ENCODE measurements at regions of chr1 and their contacts with region 1.

Region 1: GRCh38 chr1:226157761-226158316 is 28.7 kb downstream of the ACBD3 start:
- DNase-seq: no peak
- ATAC-seq: peak; percentile 80
- H3K4me3 Mint-ChIP-seq: peak overlapping the region; percentile 29
- H3K27ac Mint-ChIP-seq: peak overlapping the region; percentile 89
- H3K4me1 Mint-ChIP-seq: peaks cover 78% of the 10 kb centered on the region
- H3K27me3 Mint-ChIP-seq: no peaks in the 10 kb centered on the region
- CTCF ChIP-seq: no peak

Region 2: GRCh38 chr1:226128487-226129075 is 29.3 kb before region 1 on chr1:
- CTCF ChIA-PET with region 1: interaction called, 26 read pairs
- POLR2A ChIA-PET with region 1: interaction called, 9 read pairs
- intact Hi-C with region 1: loop called (anchors 2 kb)
- DNase-seq: no peak
- ATAC-seq: no peak
- H3K4me3 Mint-ChIP-seq: peak overlapping the region; percentile 41
- H3K27ac Mint-ChIP-seq: peak overlapping the region; percentile 99
- H3K4me1 Mint-ChIP-seq: peaks cover 96% of the 10 kb centered on the region
- H3K27me3 Mint-ChIP-seq: no peaks in the 10 kb centered on the region
- CTCF ChIP-seq: no peak